Heart right ventricle (tissue), 16 donors: ENCODE measurements at regions of chr20 and their contacts with region 1.

Region 1: DNA sequence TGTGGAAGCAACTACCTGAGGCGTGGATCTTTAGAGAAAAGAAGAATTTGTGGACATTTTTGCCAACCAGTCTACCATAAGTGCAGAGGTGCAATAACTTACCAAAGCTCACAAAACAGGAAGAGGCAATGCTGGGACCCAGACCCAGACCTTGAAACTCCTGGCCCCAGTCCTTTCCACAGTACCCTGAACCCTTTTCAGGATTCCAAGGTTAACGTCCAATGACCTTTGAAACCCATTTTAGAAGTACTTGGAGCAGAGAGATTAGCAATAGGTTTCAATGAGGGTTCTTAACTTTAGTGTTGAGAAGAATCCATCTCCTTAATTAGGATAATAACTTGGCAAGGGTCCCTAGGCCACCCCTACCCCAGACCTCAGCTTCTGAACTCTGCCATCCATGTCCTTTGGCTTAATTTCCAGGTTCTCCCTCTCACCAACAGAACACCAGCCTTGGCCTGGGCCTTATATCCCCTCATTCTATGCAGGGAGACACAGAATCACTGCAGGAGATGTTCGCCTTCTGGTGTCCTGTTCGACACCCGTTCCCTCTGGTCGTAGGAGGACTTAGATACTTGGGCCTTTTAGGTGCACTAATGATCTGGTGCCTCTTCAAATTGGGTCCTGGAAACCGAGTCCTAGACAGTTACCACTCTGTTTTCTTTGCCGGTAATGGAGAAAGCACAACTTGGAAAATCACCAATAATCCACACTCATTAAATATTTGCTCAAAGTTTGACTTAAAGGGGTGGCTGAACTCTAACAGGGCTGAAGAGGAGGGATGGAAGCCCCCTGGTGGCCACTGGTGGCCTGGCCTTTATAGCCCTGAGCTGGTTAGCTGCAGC is 40.6 kb downstream of the ISM1 start:
- DNase-seq: peak; percentile 40 to 46
- ATAC-seq: peak in 7 of 8 donors; percentile 69 to 93 (median 77)
- H3K4me3 ChIP-seq: no peak overlapping the region
- H3K27ac ChIP-seq: no peak overlapping the region
- H3K4me1 ChIP-seq: peaks cover 0 to 4% (median 0%) of the 10 kb centered on the region in 9 donors
- H3K27me3 ChIP-seq: no peaks in the 10 kb centered on the region
- CTCF ChIP-seq: peak; percentile 44 to 78 (median 71)

Region 2: GRCh38 chr20:13199279-13199678 is 62.4 kb before region 1 on chr20:
- intact Hi-C with region 1: loop called in 1 of 10 experiments (anchors 10 kb)
- DNase-seq: no peak
- ATAC-seq: no peak
- H3K4me3 ChIP-seq: no peak overlapping the region
- H3K27ac ChIP-seq: no peak overlapping the region
- H3K4me1 ChIP-seq: no peaks in the 10 kb centered on the region
- H3K27me3 ChIP-seq: peaks cover 0 to 4% (median 0%) of the 10 kb centered on the region in 7 donors
- CTCF ChIP-seq: no peak

Region 3: DNA sequence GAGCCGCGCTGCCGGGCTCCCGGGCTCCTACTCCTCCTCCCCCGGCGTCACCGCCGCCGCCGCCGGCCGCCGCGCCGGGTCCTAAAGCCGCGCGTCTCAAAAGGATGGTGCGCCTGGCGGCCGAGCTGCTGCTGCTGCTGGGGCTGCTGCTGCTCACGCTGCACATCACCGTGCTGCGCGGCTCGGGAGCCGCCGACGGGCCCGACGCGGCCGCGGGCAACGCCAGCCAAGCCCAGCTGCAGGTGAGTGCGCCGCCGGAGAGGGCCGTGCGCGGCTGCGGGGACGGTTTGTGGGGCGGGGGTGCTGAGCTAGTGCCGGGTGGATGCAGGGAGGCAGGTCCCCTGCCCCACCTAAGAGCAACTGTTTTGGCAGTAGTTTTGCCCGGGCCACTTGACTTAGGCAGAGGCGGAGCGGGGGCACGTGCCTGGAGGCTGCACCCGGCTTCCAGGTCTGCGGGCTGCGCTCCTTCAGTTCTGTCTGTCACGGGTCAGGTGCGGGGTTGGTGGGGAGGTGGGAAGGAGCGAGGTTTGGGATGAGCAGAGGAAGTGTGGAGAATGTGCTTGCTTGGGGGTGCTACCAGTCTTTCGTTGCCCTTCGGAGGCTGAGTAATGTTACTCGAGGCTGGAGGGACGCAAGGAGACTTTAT is 39.9 kb before region 1 on chr20:
- intact Hi-C with region 1: loop called in 1 of 10 experiments (anchors 2 kb)
- DNase-seq: peak in 1 of 2 donors; percentile 39
- ATAC-seq: peak; percentile 36 to 86 (median 64)
- H3K4me3 ChIP-seq: peak overlapping the region; percentile 30 to 68 (median 53)
- H3K27ac ChIP-seq: peak overlapping the region in 7 of 10 donors; percentile 35 to 73 (median 50)
- H3K4me1 ChIP-seq: peaks cover 5 to 31% (median 17%) of the 10 kb centered on the region in 9 donors
- H3K27me3 ChIP-seq: peaks cover 3 to 72% (median 44%) of the 10 kb centered on the region in 7 donors
- CTCF ChIP-seq: no peak